Activated CD8-positive, alpha-beta T cell treated with anti-CD3 and anti-CD28 coated beads, Interleukin-2, amount 10 ng/mL, durations not matched to agents 7 days and 5 days (primary cell): ENCODE measurements at regions of chr12 and their contacts with region 1.

Region 1: DNA sequence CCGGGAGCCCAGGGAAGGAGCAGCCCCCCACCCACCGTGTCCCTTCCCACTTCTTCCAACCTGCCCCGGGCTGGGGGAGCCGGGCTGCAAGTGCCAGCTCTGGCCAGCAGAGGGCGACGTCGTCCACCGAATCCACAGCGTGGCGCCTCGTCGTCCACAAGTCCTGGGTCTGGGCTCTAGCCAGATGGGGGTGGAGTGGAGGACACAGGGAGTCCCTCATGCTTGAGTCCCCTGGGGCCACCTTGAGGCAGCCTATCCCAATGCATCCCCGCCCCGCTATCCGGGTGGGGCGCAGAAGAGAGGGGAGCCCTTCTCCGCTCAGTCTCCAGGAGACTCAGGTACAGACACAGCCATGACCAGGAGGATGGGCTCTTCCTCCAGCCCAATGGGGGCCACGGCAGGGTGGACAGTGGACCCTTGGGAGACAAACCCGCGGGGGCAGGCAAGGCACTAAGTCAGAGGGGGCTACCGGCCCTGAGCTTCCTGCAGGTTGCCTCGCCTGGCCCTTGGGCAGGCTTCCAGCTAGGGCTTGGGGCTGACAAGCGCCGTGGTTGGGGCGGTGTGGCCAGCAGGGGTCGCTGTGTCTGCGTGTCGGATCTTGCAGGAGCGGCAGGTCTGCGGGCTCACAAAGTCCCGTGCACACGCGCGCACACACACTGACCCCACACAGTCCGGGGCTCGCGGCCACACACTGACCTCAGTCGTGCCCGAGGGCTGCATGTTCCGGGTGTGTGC is 5.5 kb downstream of the AQP5 start:
- DNase-seq: peak; percentile 94
- ATAC-seq: peak; percentile 92
- H3K4me3 Mint-ChIP-seq: peak overlapping the region; percentile 60
- H3K27ac Mint-ChIP-seq: no peak overlapping the region
- H3K4me1 Mint-ChIP-seq: peaks cover 5% of the 10 kb centered on the region
- H3K27me3 Mint-ChIP-seq: peaks cover 36% of the 10 kb centered on the region

Region 2: GRCh38 chr12:49776413-49776812 is 190.8 kb before region 1 on chr12:
- CTCF ChIA-PET with region 1: interaction called, 13 read pairs
- POLR2A ChIA-PET with region 1: no interaction called
- DNase-seq: peak; percentile 78
- ATAC-seq: peak; percentile 85
- H3K4me3 Mint-ChIP-seq: no peak overlapping the region
- H3K27ac Mint-ChIP-seq: peak overlapping the region; percentile 48
- H3K4me1 Mint-ChIP-seq: peaks cover 20% of the 10 kb centered on the region
- H3K27me3 Mint-ChIP-seq: peaks cover 20% of the 10 kb centered on the region

Region 3: DNA sequence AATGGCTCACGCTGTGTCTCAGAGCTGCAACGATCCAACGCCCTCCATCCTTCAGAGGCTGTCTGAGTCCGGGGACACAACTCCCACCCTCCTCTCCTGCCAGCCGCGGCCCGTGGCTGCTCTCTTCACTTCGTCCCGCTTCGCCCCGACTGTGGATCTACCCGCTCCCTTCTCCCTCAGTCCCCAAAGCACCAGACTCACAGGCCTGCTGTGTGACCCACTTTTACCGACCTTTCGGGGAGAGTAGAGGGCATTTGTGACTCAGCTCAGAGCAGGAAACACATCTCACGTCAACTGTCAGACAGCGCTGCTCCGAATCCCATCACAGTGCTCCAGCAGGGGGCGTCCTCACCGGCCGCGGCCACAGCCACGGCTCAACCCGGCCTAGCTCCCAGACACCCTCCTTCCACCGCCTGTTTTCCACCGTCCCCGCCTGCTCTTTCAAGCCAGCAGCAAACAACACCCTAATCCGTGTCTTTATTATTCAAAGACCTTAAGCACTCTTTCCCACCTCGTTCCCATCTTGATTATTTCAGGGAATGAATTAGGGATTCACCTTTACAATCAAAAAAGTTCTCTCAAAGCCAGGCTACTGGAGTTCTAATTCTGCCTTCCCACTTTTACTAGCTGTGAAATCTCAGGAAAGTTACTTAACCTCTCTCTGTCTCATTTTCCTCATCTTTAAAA is 21.7 kb before region 1 on chr12:
- CTCF ChIA-PET with region 1: interaction called, 103 read pairs
- POLR2A ChIA-PET with region 1: no interaction called
- DNase-seq: peak; percentile 88
- ATAC-seq: peak; percentile 99
- H3K4me3 Mint-ChIP-seq: peak overlapping the region; percentile 70
- H3K27ac Mint-ChIP-seq: peak overlapping the region; percentile 92
- H3K4me1 Mint-ChIP-seq: peaks cover 24% of the 10 kb centered on the region
- H3K27me3 Mint-ChIP-seq: no peaks in the 10 kb centered on the region

Region 4: DNA sequence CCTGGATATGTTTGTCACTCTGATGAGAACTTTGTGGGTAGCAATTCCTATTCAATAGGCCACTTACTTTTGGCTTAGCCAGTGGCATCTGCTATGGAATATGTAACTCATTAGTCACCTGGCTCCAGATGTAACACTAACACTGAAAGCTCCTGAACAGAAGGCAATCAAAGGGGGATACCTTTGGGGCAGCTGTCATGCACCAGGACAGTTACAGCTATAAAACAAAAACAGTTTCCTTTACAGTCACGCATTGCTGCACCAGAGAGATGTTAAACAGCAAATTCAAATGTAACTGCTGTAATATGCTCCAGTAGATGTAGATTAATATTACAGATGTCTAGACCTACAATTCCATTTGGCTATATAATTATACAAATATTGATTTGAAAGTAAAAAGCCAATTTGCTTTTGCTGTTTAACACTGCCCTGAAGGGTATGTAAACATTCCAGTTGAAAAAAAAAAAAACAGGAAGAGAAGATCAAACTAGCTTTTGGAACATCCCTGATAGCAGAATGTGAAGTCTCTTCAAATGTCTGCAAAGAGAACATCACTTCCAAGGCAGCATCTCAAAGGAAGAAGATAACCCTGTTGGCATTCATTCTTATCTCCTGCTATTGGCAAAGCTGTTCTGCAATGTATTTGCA is 39.7 kb after region 1 on chr12:
- CTCF ChIA-PET with region 1: interaction called, 13 read pairs
- POLR2A ChIA-PET with region 1: no interaction called
- DNase-seq: no peak
- ATAC-seq: no peak
- H3K4me3 Mint-ChIP-seq: no peak overlapping the region
- H3K27ac Mint-ChIP-seq: no peak overlapping the region
- H3K4me1 Mint-ChIP-seq: peaks cover 7% of the 10 kb centered on the region
- H3K27me3 Mint-ChIP-seq: no peaks in the 10 kb centered on the region

Region 5: DNA sequence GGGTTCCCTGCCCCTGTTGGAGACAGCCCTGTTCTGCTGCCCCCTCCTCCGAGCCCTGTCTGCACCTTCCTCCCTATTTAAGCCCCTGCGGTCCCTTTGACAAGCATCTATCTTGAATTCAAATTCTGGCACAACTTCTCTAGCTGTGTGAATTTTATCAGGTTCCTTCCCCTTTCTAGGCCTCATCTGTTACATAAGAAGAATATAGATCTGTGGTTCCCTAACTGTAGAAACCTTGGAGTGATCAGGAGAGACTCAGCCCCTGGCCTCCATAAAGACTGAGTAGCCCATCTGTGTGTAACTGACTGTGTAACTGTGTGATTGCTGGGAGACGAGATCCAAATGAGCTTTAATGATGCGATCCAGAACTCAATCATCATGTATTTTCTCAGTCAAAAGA is 71.1 kb after region 1 on chr12:
- CTCF ChIA-PET with region 1: interaction called, 46 read pairs
- POLR2A ChIA-PET with region 1: no interaction called
- DNase-seq: no peak
- ATAC-seq: no peak
- H3K4me3 Mint-ChIP-seq: no peak overlapping the region
- H3K27ac Mint-ChIP-seq: no peak overlapping the region
- H3K4me1 Mint-ChIP-seq: peaks cover 4% of the 10 kb centered on the region
- H3K27me3 Mint-ChIP-seq: peaks cover 10% of the 10 kb centered on the region

Region 6: GRCh38 chr12:50084775-50085614 is 117.8 kb after region 1 on chr12 and contains the start of gene SMARCD1:
- CTCF ChIA-PET with region 1: interaction called, 11 read pairs
- POLR2A ChIA-PET with region 1: no interaction called
- DNase-seq: peak; percentile 86
- ATAC-seq: peak; percentile 90
- H3K4me3 Mint-ChIP-seq: peak within 1 kb of the TSS; percentile 90
- H3K27ac Mint-ChIP-seq: peak within 1 kb of the TSS; percentile 94
- H3K4me1 Mint-ChIP-seq: peaks cover 29% of the 10 kb centered on the region
- H3K27me3 Mint-ChIP-seq: no peaks in the 10 kb centered on the region
- total RNA-seq, gene SMARCD1: 72.3 to 78.1 TPM